ENCODE measurements at regions of chr9 and their contacts with region 1.

Region 1: DNA sequence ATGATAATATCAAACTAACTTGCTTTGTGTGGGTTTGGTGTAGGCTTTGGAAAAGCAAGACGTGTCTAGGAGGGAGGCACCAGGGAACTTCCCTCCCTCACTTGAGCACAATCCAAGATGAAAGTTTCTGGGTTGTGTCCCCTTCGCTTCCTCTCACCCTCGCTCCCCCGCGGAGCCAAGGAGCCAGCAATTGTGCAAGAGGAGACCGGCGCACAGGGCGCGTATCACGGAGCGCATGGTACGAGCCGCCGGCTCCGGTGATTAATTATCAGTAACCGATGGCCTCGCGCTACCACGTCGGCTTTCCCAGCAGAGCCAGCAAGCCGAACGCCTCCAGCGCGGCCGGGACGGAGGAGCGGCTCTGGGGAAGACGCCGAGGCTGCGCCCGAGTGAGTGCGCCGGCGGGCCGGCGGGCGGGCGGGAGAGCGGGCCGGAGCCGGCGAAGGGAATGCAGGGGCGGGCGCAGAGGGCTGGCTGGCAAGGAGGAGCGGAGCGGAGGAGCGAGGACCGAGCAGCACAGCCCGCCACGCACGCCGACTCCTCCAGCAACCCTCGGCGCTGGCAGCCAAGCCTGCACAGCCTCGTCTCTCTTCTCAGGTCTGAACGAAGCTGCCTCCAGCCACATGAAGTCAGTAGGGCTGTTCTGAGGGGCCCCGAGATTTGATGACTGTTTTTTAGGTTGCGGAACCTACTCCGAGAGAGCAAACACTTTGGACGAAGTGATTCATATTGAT is 143.6 kb downstream of the BNC2 start:
- DNase-seq: peak; percentile 85 to 93
- ATAC-seq: peak; percentile 89
- H3K4me3 ChIP-seq: peak overlapping the region; percentile 29 to 62
- H3K27ac ChIP-seq: peak overlapping the region; percentile 4 to 73
- H3K4me1 ChIP-seq: no peaks in the 10 kb centered on the region
- H3K27me3 ChIP-seq: no peaks in the 10 kb centered on the region

Region 2: DNA sequence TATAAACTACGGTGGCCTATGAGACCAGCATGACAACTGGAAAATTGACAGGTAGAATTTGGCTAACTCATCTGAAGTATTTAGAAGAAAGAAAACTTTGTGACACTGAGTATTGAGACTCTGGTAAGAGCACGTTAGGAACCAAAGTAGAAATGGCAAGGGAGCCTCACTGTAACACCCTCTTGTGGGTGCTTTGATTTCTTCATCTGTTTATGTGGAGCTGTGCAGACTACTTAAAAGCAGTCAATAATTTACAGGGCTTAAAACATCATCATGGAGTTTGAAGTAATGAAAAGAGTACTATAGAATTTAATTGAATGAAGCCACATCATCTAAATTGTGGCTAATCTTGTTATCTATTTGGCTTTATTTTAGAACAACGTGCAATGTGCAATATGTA is 759.8 kb before region 1 on chr9:
- intact Hi-C with region 1: no loop called
- DNase-seq: no peak
- ATAC-seq: no peak
- H3K4me3 ChIP-seq: no peak overlapping the region
- H3K27ac ChIP-seq: no peak overlapping the region
- H3K4me1 ChIP-seq: no peaks in the 10 kb centered on the region
- H3K27me3 ChIP-seq: no peaks in the 10 kb centered on the region

Region 3: DNA sequence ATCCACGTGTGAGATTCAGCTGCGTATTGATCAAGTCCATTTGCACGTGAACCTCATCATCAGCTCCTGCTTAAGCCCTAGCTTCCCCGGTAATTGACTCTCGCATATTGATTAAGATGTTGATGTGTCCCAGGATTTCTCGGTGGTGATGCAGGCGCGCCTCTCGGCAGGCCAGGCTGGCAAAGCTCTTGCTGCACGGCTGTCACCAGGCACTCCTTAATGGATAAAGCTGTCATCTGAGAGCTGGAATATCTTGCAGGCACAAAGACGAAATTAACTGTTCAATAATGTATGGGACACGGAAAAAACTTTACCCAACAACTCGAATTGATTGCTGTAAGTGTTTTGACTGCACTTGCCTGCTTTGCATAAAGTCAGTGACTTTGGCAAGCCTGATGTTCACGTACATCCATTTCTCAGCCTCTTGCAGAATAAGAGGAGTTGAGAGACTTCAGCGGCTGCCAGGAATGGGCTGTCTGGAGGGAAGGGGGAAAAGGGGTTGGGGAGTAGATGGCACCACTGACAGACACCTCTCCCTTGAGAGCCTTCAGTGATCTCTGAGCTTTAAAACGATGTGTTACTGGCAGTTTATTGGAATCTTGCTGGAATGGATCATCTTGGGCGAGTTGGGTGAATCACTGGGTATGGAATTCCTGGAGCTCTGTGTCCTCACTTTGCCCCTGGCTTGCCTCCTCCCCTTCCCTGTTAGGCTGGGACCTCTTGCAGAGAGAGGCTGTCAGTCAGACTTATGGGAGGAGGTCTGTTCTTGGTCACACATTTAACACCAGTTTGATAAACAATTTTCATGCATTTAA is 523.8 kb before region 1 on chr9:
- intact Hi-C with region 1: loop called in 1 of 2 experiments (anchors 5 kb)
- DNase-seq: no peak
- ATAC-seq: no peak
- H3K4me3 ChIP-seq: no peak overlapping the region
- H3K27ac ChIP-seq: no peak overlapping the region
- H3K4me1 ChIP-seq: peaks cover 0 to 2% of the 10 kb centered on the region in 2 donors
- H3K27me3 ChIP-seq: no peaks in the 10 kb centered on the region

Region 4: GRCh38 chr9:16705121-16705604 is 21.7 kb before region 1 on chr9:
- intact Hi-C with region 1: loop called in 1 of 2 experiments (anchors 2 kb)
- DNase-seq: peak; percentile 94 to 96
- ATAC-seq: peak; percentile 94
- H3K4me3 ChIP-seq: peak overlapping the region; percentile 16 to 78
- H3K27ac ChIP-seq: peak overlapping the region in 1 of 2 donors; percentile 92
- H3K4me1 ChIP-seq: peaks cover 0 to 2% of the 10 kb centered on the region in 2 donors
- H3K27me3 ChIP-seq: no peaks in the 10 kb centered on the region

Region 5: DNA sequence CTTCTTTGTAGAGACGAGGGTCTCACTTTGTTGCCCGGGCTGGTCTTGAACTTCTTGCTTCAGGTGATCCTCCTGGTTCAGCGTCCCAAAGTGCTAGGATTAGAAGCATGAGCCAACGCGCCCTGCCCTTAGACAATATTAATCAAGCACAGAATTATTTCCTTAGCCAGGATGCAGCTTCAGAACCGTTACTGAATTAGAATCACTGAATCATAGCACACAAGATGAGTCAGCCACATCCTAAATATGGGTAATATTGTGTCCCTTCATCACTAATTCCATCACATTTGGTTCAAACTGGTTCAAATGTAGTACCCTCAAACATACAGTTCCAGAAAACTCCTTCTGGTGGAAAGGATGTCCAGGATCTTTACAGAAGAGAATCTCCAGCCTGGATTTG is 60.8 kb after region 1 on chr9:
- intact Hi-C with region 1: no loop called
- DNase-seq: no peak
- ATAC-seq: no peak
- H3K4me3 ChIP-seq: no peak overlapping the region
- H3K27ac ChIP-seq: no peak overlapping the region
- H3K4me1 ChIP-seq: no peaks in the 10 kb centered on the region
- H3K27me3 ChIP-seq: no peaks in the 10 kb centered on the region

Region 6: GRCh38 chr9:16871356-16872151 is 144.7 kb after region 1 on chr9:
- intact Hi-C with region 1: loop called in 1 of 2 experiments (anchors 5 kb)
- DNase-seq: peak; percentile 84 to 86
- ATAC-seq: peak; percentile 73
- H3K4me3 ChIP-seq: peak overlapping the region; percentile 73
- H3K27ac ChIP-seq: peak overlapping the region in 1 of 2 donors; percentile 30
- H3K4me1 ChIP-seq: no peaks in the 10 kb centered on the region
- H3K27me3 ChIP-seq: no peaks in the 10 kb centered on the region

Measured in aorta (tissue), 5 donors.